CD8-positive, alpha-beta T cell (primary cell): ENCODE measurements at regions of chr7 and their contacts with region 1.

Region 1: GRCh38 chr7:16484453-16485158 is 19.1 kb upstream of the SOSTDC1 start:
- DNase-seq: no peak
- ATAC-seq: no peak
- H3K4me3 ChIP-seq: no peak overlapping the region
- H3K4me3 Mint-ChIP-seq: no peak overlapping the region
- H3K27ac ChIP-seq: no peak overlapping the region
- H3K27ac Mint-ChIP-seq: no peak overlapping the region
- H3K4me1 ChIP-seq: no peaks in the 10 kb centered on the region
- H3K4me1 Mint-ChIP-seq: no peaks in the 10 kb centered on the region
- H3K27me3 ChIP-seq: no peaks in the 10 kb centered on the region
- H3K27me3 Mint-ChIP-seq: peaks cover 2% of the 10 kb centered on the region
- CTCF ChIP-seq: no peak

Region 2: DNA sequence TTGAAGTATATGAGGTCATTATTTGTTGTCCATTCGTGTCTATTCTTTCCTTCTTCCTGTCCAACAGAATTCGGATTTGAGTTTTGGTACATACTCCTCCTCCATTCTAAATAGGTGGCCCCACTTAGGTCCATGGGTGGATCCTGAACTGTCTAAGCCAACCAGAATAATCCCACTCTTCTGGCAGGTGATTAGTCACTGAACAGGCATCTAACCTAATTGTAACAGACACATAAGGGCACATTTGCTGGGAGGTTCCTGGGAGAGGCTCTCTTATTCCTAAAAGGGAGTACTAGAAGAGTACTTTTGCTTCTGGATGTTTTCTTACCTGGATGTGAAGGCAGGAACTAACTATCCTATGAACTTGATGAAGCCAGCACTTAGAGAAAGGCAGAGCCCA is 58.9 kb after region 1 on chr7:
- CTCF ChIA-PET with region 1: no interaction called
- POLR2A ChIA-PET with region 1: no interaction called
- intact Hi-C with region 1: loop called in 1 of 2 experiments (anchors 2 kb)
- DNase-seq: no peak
- ATAC-seq: no peak
- H3K4me3 ChIP-seq: no peak overlapping the region
- H3K4me3 Mint-ChIP-seq: no peak overlapping the region
- H3K27ac ChIP-seq: no peak overlapping the region
- H3K27ac Mint-ChIP-seq: no peak overlapping the region
- H3K4me1 ChIP-seq: no peaks in the 10 kb centered on the region
- H3K4me1 Mint-ChIP-seq: no peaks in the 10 kb centered on the region
- H3K27me3 ChIP-seq: no peaks in the 10 kb centered on the region
- H3K27me3 Mint-ChIP-seq: no peaks in the 10 kb centered on the region
- CTCF ChIP-seq: no peak